Dendritic cell treated with granulocyte-macrophage colony-stimulating factor and Interleukin-4, amounts not matched to agents 40 ng/mL and 50 ng/mL, for 4 days (primary cell): ENCODE measurements at regions of chr10 and their contacts with region 1.

Region 1: GRCh38 chr10:49242604-49243003 is 54.4 kb upstream of the TMEM273 start:
- H3K4me3 Mint-ChIP-seq: no peak overlapping the region
- H3K27ac Mint-ChIP-seq: peak overlapping the region; percentile 91
- H3K4me1 Mint-ChIP-seq: peaks cover 59% of the 10 kb centered on the region
- H3K27me3 Mint-ChIP-seq: no peaks in the 10 kb centered on the region

Region 2: DNA sequence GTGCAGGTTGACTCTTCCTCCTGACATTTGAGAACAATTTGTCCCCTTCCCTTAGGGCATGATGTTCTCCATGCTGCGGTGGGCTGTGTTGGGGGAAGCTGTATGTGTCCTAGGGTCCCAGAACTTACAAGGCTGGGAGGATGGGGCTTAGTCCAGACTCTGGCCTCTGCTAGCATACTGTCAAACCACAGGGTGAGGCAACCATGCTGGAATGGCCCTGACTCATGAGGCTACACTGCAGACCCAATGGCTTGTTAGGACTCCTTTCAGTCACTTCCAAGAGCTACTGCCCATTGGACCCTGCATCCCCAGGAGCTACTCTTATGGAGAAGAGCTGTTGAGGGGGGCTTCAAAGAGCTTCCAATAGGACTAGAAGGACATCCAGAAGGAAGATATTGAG is 88.6 kb before region 1 on chr10:
- intact Hi-C with region 1: no loop called
- H3K4me3 Mint-ChIP-seq: no peak overlapping the region
- H3K27ac Mint-ChIP-seq: no peak overlapping the region
- H3K4me1 Mint-ChIP-seq: peaks cover 14% of the 10 kb centered on the region
- H3K27me3 Mint-ChIP-seq: peaks cover 5% of the 10 kb centered on the region

Region 3: DNA sequence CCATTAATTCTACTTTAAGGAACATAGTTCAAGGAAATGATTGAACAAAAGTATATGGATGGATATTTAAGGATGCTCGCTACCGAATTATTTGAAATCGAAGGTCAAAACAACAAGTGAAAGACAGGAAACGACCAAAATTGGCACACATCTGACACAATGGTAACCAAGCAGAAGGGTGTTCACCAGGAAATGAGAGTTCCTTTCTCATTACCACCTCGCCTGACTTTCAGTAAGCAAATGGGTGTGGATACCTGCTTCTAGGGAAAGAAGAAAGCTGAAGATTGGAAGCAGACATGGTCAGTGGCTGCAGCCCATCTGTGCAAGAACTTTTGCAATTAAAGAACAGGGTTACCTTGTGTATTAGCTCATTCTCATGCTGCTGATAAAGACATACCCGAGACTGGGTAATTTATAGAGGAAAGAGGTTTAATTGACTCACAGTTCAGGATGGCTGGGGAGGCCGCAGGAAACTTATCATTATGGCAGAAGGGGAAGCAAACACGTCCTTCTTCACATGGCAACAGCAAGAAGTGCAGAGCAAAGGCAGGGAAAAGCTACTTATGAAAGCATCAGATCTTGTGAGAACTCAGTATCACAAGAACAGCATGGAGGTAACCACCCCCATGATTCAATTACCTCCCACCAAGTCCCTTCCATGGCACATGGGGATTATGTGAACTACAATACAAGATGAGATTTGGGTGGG is 48.2 kb before region 1 on chr10:
- intact Hi-C with region 1: loop called (anchors 5 kb)
- H3K4me3 Mint-ChIP-seq: no peak overlapping the region
- H3K27ac Mint-ChIP-seq: peak overlapping the region; percentile 35
- H3K4me1 Mint-ChIP-seq: peaks cover 30% of the 10 kb centered on the region
- H3K27me3 Mint-ChIP-seq: peaks cover 7% of the 10 kb centered on the region

Region 4: DNA sequence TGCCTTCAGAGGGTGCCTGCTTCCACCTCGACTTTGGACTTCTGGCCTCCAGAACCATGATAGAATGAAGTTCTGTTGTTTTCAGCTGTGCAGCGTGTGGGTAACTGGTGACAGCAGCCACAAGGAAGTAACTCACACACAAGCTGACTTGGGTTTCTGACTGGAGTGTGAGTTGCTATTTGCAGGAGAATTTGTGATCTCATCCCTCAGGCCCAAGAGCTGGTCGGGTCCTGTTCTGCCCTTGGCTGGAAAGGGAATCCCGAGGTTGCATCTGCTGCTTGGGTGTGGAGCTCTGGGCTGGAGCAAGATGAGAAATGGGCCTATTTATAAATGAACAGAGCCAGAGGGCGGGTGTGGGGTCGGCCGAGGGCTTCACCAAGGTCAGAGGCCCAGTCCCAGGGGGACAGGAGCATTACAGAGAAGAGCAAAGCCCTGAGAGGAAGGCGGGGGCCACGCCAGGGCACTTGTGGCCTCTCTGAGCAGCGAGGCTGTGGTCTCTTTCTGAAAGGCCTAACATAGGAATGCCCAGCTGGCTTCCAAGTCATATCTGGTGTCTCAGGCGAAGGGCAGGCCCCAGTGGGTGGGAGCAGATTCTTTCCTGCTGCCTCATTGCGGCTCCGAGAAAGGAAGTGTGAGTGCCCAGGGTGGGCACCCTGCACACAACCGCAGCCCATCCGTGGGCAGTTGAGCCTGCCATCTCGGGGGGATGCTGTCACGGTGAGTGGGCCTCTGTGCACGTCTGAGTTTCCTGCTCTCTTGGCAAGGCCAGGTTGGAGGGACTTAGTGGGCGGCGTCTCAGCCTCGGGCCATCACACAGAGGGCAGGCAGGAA is 29.9 kb after region 1 on chr10:
- intact Hi-C with region 1: no loop called
- H3K4me3 Mint-ChIP-seq: peak overlapping the region; percentile 44
- H3K27ac Mint-ChIP-seq: peak overlapping the region; percentile 95
- H3K4me1 Mint-ChIP-seq: peaks cover 60% of the 10 kb centered on the region
- H3K27me3 Mint-ChIP-seq: peaks cover 11% of the 10 kb centered on the region

Region 5: DNA sequence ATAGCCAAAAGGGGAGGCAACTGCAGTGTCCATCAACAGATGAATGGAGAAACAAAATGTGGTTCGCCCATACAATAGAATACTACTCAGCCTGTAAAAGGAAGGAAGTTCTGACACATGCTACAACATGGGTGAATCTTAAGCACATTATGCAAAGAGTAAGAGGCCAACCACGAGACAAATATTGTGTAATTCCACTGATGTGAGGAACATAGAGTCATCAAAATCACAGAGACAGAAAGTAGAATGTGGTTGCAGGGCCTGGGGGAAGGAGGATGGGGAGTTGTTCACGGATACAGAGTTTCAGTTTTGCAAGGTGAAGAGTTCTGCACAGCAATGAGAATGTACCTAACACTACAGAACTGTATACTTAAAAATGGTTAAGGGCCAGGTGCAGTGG is 42.6 kb after region 1 on chr10:
- intact Hi-C with region 1: no loop called
- H3K4me3 Mint-ChIP-seq: peak overlapping the region; percentile 50
- H3K27ac Mint-ChIP-seq: peak overlapping the region; percentile 71
- H3K4me1 Mint-ChIP-seq: peaks cover 55% of the 10 kb centered on the region
- H3K27me3 Mint-ChIP-seq: peaks cover 10% of the 10 kb centered on the region